AG04450 (cell line): ENCODE measurements at regions of chr6 and their contacts with region 1.

Region 1: DNA sequence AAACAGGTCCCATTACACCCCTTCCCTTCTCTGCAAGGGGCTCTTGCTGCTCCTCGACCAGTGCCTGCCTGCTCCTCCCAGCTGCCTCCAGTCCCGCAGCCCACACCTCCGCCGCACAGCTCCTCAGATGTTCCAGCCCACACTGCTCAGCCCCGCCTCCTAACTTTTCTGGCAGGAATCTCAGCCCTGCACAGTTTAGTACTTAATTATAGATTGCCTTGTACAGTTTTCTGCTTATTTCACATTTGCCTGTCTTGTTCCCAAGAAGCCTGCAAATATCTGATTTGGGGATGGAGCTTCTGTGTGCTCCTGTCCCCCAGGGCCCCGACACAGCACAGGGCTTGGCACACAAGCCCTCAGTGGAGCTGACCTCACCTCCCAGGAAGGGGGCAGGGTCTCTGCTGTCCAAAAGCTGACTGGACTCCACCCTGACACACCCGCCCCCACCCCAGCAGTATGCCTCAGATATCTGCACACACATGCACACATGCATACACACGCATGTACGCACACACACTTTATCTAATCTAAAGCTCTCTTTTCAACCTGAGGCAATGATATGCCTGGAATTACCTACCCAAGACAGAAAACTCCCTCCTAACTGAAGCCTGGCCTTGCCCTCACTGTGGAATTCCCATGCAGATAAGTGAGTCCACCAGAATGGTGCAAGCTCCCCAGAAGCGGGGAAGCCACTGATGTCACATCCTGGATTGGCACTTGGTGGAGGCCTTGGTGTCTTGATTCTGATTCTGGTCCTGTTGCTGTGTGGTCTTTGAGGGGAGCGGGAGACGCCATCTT is 1.2 kb upstream of the PNPLA1 start:
- DNase-seq: no peak
- H3K4me3 ChIP-seq: no peak overlapping the region
- H3K27ac ChIP-seq: no peak overlapping the region
- H3K27me3 ChIP-seq: peaks cover 31% of the 10 kb centered on the region
- CTCF ChIP-seq: no peak

Region 2: DNA sequence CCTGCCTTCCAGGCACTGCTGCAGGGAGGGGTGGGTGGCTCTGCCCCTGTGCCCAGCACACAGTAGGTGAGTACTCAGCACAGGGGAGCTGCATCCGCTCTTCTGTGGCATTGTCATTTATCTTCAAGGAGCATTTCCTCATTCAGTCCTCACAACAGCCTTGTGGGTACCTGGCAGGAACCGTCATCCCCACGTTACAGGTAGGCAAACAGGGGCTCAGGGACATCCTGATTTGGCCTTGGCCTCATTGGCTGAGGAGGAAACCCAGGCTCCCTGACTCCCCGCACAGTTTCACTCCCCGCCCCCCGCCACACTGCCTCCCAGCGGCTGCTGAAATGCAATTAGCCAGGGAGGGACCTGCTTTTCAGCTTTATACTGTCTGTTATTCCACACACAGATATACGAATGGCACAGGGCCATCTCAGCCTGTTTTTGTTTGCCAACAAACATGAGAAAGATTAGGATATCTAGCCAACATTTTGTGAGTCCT is 23.1 kb before region 1 on chr6:
- CTCF ChIA-PET with region 1: no interaction called
- POLR2A ChIA-PET with region 1: no interaction called
- DNase-seq: no peak
- H3K4me3 ChIP-seq: no peak overlapping the region
- H3K27ac ChIP-seq: no peak overlapping the region
- H3K27me3 ChIP-seq: no peaks in the 10 kb centered on the region
- CTCF ChIP-seq: peak; percentile 9; the same call in 1 of the 2 replicates

Region 3: DNA sequence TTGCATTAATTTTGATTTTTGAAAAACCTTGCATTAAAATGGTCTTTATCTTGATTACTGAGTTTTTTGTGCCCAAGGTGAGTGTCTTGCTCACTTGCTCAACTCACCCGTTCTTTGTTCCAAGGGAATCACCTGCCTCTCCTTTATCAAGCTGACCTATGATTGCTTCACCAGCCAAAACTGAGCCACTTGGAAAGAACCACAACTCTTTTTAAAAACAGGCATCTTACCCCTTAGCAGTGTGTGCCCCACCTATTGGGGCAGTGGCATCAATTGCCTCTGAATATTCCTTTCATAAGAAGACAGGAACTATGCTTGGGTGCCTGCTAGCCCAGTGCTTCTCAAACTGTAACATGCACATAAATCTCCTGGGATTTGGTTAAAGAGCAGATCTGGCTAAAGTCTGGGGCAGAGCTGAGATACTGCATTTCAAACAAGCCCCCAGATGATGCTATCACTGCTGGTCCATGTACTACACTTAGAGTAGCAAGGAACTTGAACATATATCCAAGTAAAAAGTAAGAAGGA is 281.9 kb after region 1 on chr6:
- CTCF ChIA-PET with region 1: interaction called, 12 read pairs
- POLR2A ChIA-PET with region 1: no interaction called
- DNase-seq: no peak
- H3K4me3 ChIP-seq: no peak overlapping the region
- H3K27ac ChIP-seq: no peak overlapping the region
- H3K27me3 ChIP-seq: peaks cover 3% of the 10 kb centered on the region
- CTCF ChIP-seq: no peak